Panc1 (cell line): ENCODE measurements at regions of chr2 and their contacts with region 1.

Region 1: GRCh38 chr2:86383844-86384243 is 46.4 kb upstream of the REEP1 start:
- DNase-seq: no peak
- ATAC-seq: no peak
- H3K4me3 ChIP-seq: no peak overlapping the region
- H3K27ac ChIP-seq: no peak overlapping the region
- H3K4me1 ChIP-seq: no peaks in the 10 kb centered on the region
- H3K27me3 ChIP-seq: no peaks in the 10 kb centered on the region
- CTCF ChIP-seq: no peak

Region 2: DNA sequence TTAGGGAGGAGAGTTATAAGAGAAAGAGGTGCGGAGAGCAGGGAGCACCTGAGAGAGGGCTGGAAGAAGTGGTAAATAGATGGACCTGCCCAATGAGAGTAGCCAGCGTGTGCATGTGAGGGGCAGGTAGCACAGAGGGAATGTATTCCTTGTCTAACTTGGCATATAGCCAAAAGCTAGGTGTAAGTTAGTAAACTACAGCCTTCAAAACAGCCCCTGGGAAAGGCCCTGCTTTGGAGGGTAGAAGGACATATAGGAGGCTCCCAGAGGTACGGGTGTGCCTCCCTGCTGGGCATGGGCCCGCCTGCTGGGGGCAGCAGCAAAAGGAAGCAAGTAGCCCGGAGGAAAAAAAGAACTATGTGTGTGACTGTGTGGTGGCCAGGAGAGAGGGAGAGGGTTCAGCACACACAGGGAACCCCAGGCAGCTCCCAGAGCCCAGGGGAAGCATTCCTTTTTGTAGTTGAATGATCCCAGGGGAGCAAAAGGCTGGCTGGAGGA is 1202.7 kb before region 1 on chr2:
- CTCF ChIA-PET with region 1: no interaction called
- POLR2A ChIA-PET with region 1: interaction called, 11 read pairs
- in situ Hi-C with region 1: no loop called
- intact Hi-C with region 1: no loop called
- DNase-seq: no peak
- ATAC-seq: peak; percentile 46; the same call in 1 of the 2 replicates
- H3K4me3 ChIP-seq: no peak overlapping the region
- H3K27ac ChIP-seq: no peak overlapping the region
- H3K4me1 ChIP-seq: peaks cover 9% of the 10 kb centered on the region
- H3K27me3 ChIP-seq: no peaks in the 10 kb centered on the region
- CTCF ChIP-seq: no peak

Region 3: GRCh38 chr2:86492048-86492453 is 108.2 kb after region 1 on chr2:
- CTCF ChIA-PET with region 1: no interaction called
- POLR2A ChIA-PET with region 1: interaction called, 10 read pairs
- in situ Hi-C with region 1: no loop called
- intact Hi-C with region 1: no loop called
- DNase-seq: no peak
- ATAC-seq: no peak
- H3K4me3 ChIP-seq: no peak overlapping the region
- H3K27ac ChIP-seq: no peak overlapping the region
- H3K4me1 ChIP-seq: peaks cover 2% of the 10 kb centered on the region; the same call in 1 of the 2 replicates
- H3K27me3 ChIP-seq: no peaks in the 10 kb centered on the region
- CTCF ChIP-seq: no peak

Region 4: GRCh38 chr2:86671337-86671981 is 287.6 kb after region 1 on chr2:
- CTCF ChIA-PET with region 1: no interaction called
- POLR2A ChIA-PET with region 1: no interaction called
- in situ Hi-C with region 1: no loop called
- intact Hi-C with region 1: no loop called
- DNase-seq: no peak
- ATAC-seq: no peak
- H3K4me3 ChIP-seq: no peak overlapping the region
- H3K27ac ChIP-seq: no peak overlapping the region
- H3K4me1 ChIP-seq: no peaks in the 10 kb centered on the region
- H3K27me3 ChIP-seq: no peaks in the 10 kb centered on the region
- CTCF ChIP-seq: no peak